ENCODE measurements at regions of chr20 and their contacts with region 1.

Region 1: GRCh38 chr20:53594068-53595017 is 704 bp upstream of the ZNF217 start:
- DNase-seq: peak; percentile 96
- H3K4me3 Mint-ChIP-seq: peak overlapping the region; percentile 96
- H3K27ac Mint-ChIP-seq: peak overlapping the region; percentile 94
- H3K4me1 Mint-ChIP-seq: peaks cover 46% of the 10 kb centered on the region
- H3K27me3 Mint-ChIP-seq: no peaks in the 10 kb centered on the region

Region 2: DNA sequence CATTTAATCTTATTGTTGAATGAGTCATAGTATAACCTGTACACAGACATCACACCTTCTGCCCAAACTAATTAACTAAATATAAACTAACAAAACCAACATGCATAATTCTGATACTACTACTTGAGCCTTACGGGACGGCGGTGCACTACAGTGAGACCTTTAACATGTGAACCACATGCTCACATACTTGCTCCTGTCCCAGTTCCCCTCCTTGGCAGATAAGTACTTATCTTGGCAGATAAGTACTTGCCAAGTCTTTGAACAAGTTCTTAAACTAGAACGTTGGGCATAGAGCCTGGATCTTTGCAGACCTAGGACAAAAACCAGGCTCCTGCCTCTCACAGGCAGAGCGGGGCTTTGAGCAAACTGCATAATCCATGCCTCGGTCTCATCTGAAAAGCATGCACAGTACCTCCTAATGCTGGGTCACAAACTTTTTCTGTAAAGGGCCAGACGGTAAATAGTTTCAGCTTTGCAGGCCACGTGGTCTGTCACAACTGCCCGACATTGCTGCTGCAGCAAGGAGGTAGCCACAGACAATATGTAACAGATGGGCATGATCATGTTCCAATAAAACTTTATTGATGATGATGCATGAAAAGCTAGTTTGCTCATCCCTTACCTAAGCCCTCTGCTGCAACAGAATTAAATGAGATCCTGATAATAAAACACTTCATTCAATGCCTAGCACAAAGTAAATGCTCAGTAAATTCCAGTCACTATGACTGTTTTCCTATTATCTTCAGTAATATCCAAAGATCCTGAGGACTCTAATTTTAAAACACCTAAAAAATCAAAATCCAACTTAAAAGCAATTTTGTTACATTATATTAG is 23.6 kb before region 1 on chr20:
- CTCF ChIA-PET with region 1: no interaction called
- POLR2A ChIA-PET with region 1: no interaction called
- intact Hi-C with region 1: no loop called
- DNase-seq: no peak
- H3K4me3 Mint-ChIP-seq: no peak overlapping the region
- H3K27ac Mint-ChIP-seq: peak overlapping the region; percentile 36
- H3K4me1 Mint-ChIP-seq: peaks cover 50% of the 10 kb centered on the region
- H3K27me3 Mint-ChIP-seq: no peaks in the 10 kb centered on the region

Region 3: GRCh38 chr20:53611449-53611894 is 17.1 kb after region 1 on chr20:
- CTCF ChIA-PET with region 1: interaction called, 3 read pairs
- POLR2A ChIA-PET with region 1: interaction called, 7 read pairs
- intact Hi-C with region 1: loop called (anchors 1 kb)
- DNase-seq: no peak
- H3K4me3 Mint-ChIP-seq: no peak overlapping the region
- H3K27ac Mint-ChIP-seq: no peak overlapping the region
- H3K4me1 Mint-ChIP-seq: peaks cover 32% of the 10 kb centered on the region
- H3K27me3 Mint-ChIP-seq: no peaks in the 10 kb centered on the region

Region 4: DNA sequence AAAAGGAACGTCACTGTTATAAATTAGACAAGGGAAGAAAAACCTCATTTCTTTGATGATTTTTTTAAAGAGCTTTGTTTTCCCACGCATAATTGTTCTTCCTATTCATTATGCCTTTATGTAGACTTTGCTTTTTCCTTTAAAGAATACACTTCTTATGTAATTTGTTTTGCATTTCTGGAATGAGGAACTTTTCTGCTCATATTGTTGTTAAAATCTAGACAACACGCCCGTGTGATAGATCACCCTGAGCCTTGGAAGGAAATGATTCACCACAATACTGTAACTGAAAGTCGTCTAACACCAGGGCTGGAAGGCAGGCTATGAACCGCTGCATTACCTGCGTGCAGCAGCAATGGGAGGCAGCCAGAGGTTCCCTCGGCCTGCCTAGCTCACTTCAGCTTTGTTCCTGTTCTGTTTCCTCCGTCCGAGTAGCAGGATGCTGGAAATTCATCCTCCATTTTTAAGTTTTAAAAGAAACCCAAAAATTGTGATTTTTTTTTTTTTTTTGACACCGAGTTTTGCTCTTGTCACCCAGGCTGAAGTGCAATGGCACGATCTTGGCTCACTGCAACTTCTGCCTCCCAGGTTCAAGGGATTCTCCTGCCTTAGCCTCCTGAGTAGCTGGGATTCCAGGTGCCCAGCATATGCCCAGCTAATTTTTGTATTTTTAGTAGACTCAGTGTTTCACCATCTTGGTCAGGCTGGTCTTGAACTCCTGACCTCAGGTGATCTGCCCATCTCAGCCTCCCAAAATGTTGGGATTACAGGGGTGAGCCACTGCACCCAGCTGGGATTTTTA is 48.9 kb after region 1 on chr20:
- CTCF ChIA-PET with region 1: no interaction called
- POLR2A ChIA-PET with region 1: no interaction called
- intact Hi-C with region 1: loop called (anchors 2 kb)
- DNase-seq: peak; percentile 76
- H3K4me3 Mint-ChIP-seq: peak overlapping the region; percentile 68
- H3K27ac Mint-ChIP-seq: peak overlapping the region; percentile 88
- H3K4me1 Mint-ChIP-seq: peaks cover 28% of the 10 kb centered on the region
- H3K27me3 Mint-ChIP-seq: no peaks in the 10 kb centered on the region

Region 5: DNA sequence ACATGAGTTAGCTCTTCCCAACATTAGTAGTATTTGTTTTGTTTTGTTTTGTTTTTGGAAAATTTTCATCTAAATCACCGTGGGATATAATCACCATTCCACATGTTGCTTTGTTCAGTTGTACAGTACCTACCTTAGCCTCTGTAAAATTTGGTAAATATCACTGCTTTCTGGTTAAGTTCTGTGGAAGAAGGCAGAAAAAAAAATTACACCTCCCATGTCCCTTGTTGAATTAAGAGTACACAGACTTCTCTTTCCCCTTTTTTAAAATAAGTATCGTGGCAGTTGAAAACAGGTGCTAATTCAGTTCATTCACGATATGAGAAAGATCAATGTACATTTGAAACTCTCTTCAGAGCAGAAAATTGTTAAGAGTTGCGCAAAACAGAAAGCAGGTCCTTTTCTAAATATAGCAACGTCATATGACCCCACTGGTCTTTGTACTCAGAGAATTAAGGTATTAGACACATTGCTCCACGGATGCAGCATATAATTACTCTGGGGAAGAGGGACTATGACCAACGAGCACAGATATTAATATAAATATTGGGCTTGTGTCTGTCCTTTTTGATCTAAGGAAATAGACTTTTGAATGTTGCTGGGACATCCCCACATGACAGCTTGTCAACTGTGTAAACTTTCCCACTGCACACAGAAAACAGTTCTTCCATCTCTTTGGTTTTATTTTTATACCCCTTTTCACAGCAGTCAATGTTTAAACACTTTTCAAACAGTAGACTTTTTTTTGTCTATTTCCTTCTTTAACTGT is 57.9 kb after region 1 on chr20:
- CTCF ChIA-PET with region 1: no interaction called
- POLR2A ChIA-PET with region 1: no interaction called
- intact Hi-C with region 1: loop called (anchors 2 kb)
- DNase-seq: no peak
- H3K4me3 Mint-ChIP-seq: peak overlapping the region; percentile 55
- H3K27ac Mint-ChIP-seq: peak overlapping the region; percentile 88
- H3K4me1 Mint-ChIP-seq: peaks cover 45% of the 10 kb centered on the region
- H3K27me3 Mint-ChIP-seq: no peaks in the 10 kb centered on the region

Region 6: DNA sequence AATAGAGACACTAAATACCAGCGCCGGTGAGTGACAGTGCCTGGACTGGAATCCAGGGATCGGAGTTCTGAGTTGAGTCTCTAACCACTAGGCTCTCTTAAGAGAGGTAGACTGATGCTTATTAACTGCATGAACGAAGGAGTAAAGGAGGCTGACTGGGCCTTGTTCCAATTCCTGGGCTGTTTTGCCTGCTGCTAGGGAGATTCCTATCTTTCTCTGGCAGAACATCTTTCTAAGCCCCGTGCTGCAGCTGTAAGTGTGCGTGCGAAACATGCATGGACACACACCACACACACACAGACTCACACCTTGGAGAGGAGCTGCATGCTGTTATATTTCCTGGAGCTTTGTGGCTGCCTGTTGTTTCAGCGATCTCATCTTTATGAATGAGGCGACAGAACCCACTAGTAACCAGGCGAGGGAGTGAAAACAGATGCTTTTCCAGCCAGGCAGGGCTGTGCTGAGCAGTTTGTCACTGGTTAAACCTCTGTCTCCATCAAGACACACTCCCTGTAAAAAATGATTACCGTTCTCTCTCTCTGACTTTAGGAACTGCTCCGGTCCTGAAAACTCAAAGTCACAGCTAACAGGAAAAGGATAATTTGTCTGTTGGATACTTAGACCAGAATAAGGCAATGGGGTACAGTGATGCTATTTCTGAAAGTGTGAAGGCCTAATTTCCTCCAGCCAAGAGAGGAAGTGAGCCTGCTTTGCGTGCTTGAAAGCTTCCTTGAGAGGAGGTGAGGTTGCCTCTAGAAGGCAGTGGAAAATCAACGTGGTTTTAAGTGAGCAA is 156.7 kb after region 1 on chr20:
- CTCF ChIA-PET with region 1: no interaction called
- POLR2A ChIA-PET with region 1: no interaction called
- intact Hi-C with region 1: loop called (anchors 2 kb)
- DNase-seq: peak; percentile 53
- H3K4me3 Mint-ChIP-seq: peak overlapping the region; percentile 45
- H3K27ac Mint-ChIP-seq: peak overlapping the region; percentile 95
- H3K4me1 Mint-ChIP-seq: peaks cover 60% of the 10 kb centered on the region
- H3K27me3 Mint-ChIP-seq: no peaks in the 10 kb centered on the region

Region 7: DNA sequence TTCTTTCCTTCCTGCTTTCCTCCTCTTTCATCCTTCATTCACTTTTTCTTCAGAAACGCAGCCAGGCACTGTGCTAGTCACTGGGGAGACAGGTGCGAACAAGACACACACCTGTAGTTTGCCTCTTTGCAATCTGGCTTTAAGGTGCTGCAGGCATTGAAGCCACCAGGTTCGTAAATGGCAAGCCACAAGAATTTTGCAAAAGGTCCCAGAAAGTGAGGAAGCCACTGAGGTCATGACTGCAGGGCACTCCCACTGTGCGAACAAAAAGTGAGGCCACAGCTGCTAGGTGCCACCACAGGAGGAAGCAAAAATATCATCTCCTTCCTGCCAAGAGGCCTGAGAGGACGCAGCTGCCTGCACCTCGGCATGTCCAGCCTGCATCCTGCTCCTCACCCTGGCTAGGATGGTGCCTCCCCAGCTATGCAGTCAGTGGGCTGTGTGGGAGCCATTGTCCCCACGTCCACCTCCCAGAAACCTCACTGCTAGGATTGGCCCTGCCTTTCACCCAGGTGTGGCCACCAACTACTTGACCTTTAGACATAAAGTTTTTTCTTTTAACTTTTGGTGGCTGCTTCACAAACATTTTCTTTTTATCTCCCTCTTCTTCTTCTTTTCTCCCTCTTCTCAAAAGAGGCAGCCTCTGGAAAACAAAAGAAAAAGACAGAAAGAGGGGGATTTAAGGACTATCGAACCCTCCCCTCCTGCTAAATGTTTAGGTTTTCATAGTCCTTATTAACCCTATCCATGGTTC is 245.3 kb after region 1 on chr20:
- CTCF ChIA-PET with region 1: no interaction called
- POLR2A ChIA-PET with region 1: no interaction called
- intact Hi-C with region 1: loop called (anchors 5 kb)
- DNase-seq: peak; percentile 66
- H3K4me3 Mint-ChIP-seq: peak overlapping the region; percentile 58
- H3K27ac Mint-ChIP-seq: peak overlapping the region; percentile 76
- H3K4me1 Mint-ChIP-seq: peaks cover 64% of the 10 kb centered on the region
- H3K27me3 Mint-ChIP-seq: no peaks in the 10 kb centered on the region

Region 8: GRCh38 chr20:54207743-54208547 is 613.6 kb after region 1 on chr20 and contains the start of gene PFDN4:
- CTCF ChIA-PET with region 1: no interaction called
- POLR2A ChIA-PET with region 1: no interaction called
- intact Hi-C with region 1: loop called (anchors 10 kb)
- DNase-seq: peak; percentile 88
- H3K4me3 Mint-ChIP-seq: peak within 1 kb of the TSS; percentile 95
- H3K27ac Mint-ChIP-seq: peak within 1 kb of the TSS; percentile 99
- H3K4me1 Mint-ChIP-seq: peaks cover 50% of the 10 kb centered on the region
- H3K27me3 Mint-ChIP-seq: peaks cover 2% of the 10 kb centered on the region
- total RNA-seq, gene PFDN4: 38.4 to 40.3 TPM

Measured in activated CD4-positive, alpha-beta memory T cell treated with anti-CD3 and anti-CD28 coated beads for 36 hours (primary cell).